HCT116 (cell line): ENCODE measurements at regions of chr3 and their contacts with region 1.

Region 1: GRCh38 chr3:128584412-128585020 is 66.1 kb downstream of the RPN1 start:
- DNase-seq: peak; percentile 68
- ATAC-seq: peak; percentile 100
- H3K4me3 ChIP-seq: no peak overlapping the region
- H3K27ac ChIP-seq: no peak overlapping the region
- H3K4me1 ChIP-seq: peaks cover 0 to 10% of the 10 kb centered on the region in 2 experiments; a peak in 1 of 4 replicates
- H3K27me3 ChIP-seq: no peaks in the 10 kb centered on the region
- CTCF ChIP-seq: peak; percentile 89 to 97 (median 91)
- POLR2A ChIP-seq: no peak
- RAD21 ChIP-seq: peak; percentile 99

Region 2: DNA sequence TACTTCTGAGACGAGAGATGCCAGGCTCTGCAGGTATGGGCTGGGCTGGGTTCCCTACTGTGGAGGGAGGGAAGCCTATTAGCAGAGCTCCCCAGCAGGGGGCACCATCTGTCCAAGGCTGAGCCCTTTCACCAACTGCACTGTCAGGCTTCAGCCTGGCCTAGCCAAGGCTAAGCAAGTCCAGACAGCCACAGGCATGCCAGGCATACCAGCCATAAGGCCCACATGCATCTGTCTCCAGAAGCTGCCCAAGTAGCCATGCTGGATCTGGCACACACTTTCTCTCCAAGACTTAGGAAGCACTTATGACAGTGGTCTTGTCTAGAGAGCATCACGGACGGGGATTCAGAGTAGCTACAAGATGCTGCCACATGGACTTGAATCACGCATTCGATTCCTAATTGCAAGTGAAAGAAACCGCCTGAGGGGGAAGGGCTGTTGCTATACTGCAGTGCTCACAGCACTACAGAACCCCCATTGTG is 489.3 kb before region 1 on chr3:
- CTCF ChIA-PET with region 1: interaction called, 6 read pairs
- POLR2A ChIA-PET with region 1: no interaction called
- RAD21 ChIA-PET with region 1: no interaction called
- intact Hi-C with region 1: loop called (anchors 5 kb)
- DNase-seq: peak; percentile 32
- ATAC-seq: peak; percentile 99
- H3K4me3 ChIP-seq: no peak overlapping the region
- H3K27ac ChIP-seq: no peak overlapping the region; the same call in 1 of the 2 replicates
- H3K4me1 ChIP-seq: peaks cover 0 to 4% of the 10 kb centered on the region in 2 experiments; a peak in 1 of 4 replicates
- H3K27me3 ChIP-seq: no peaks in the 10 kb centered on the region
- CTCF ChIP-seq: peak; percentile 48 to 75 (median 75)
- POLR2A ChIP-seq: no peak
- RAD21 ChIP-seq: peak; percentile 77

Region 3: DNA sequence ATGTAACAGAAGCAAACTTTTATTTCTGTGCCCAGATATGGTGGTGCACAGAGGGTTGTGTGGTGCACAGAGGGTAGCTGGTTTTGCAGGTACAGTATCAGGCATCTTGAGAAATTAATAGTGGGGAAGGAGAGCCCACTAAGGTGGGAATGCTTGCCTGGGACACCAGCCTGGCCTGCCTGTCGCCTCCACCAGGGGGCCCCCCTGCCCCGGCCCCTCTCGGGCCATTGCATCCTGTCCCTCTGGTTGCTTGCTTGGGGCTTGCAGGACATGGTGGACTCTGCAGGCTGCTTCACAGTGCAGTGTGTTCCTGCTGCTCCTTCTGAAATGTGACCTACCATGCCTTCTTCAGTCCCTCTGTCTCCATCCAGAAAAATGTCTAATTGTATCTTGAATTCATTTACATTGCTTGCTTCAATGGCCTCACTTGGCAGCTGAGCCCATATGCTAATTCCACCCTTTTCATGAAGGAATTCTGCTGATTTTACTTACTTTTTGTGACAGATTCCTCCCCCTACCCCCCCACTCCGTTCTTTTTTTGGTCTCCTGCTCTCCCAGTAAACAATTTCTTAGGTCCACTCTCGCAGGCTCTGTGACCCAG is 357.6 kb before region 1 on chr3:
- CTCF ChIA-PET with region 1: interaction called, 3 read pairs
- POLR2A ChIA-PET with region 1: no interaction called
- RAD21 ChIA-PET with region 1: no interaction called
- intact Hi-C with region 1: loop called (anchors 1 kb)
- DNase-seq: peak; percentile 10
- ATAC-seq: peak; percentile 99
- H3K4me3 ChIP-seq: no peak overlapping the region
- H3K27ac ChIP-seq: no peak overlapping the region
- H3K4me1 ChIP-seq: no peaks in the 10 kb centered on the region
- H3K27me3 ChIP-seq: no peaks in the 10 kb centered on the region
- CTCF ChIP-seq: peak; percentile 75 to 97 (median 89)
- POLR2A ChIP-seq: no peak
- RAD21 ChIP-seq: peak; percentile 79

Region 4: GRCh38 chr3:128307029-128307633 is 277.4 kb before region 1 on chr3:
- CTCF ChIA-PET with region 1: interaction called, 5 read pairs
- POLR2A ChIA-PET with region 1: no interaction called
- RAD21 ChIA-PET with region 1: no interaction called
- intact Hi-C with region 1: loop called (anchors 5 kb)
- DNase-seq: no peak
- ATAC-seq: peak; percentile 58
- H3K4me3 ChIP-seq: no peak overlapping the region
- H3K27ac ChIP-seq: no peak overlapping the region
- H3K4me1 ChIP-seq: no peaks in the 10 kb centered on the region
- H3K27me3 ChIP-seq: no peaks in the 10 kb centered on the region
- CTCF ChIP-seq: peak in 1 of 3 experiments; percentile 33; a peak in 1 of 6 replicates
- POLR2A ChIP-seq: no peak
- RAD21 ChIP-seq: peak; percentile 58

Region 5: GRCh38 chr3:128426128-128426921 is 158.2 kb before region 1 on chr3:
- CTCF ChIA-PET with region 1: interaction called, 18 read pairs
- POLR2A ChIA-PET with region 1: no interaction called
- RAD21 ChIA-PET with region 1: interaction called in 1 of 2 experiments, 7 read pairs
- intact Hi-C with region 1: loop called (anchors 1 kb)
- DNase-seq: no peak
- ATAC-seq: peak; percentile 82
- H3K4me3 ChIP-seq: peak overlapping the region; percentile 8 to 49; a peak in 2 of 4 replicates
- H3K27ac ChIP-seq: peak overlapping the region; percentile 44; the same call in 1 of the 2 replicates
- H3K4me1 ChIP-seq: peaks cover 40 to 61% of the 10 kb centered on the region in 2 experiments
- H3K27me3 ChIP-seq: peaks cover 6% of the 10 kb centered on the region
- CTCF ChIP-seq: peak in 2 of 3 experiments; percentile 63 to 74; a peak in 4 of 6 replicates
- POLR2A ChIP-seq: no peak
- RAD21 ChIP-seq: no peak